ENCODE measurements at regions of chr3 and their contacts with region 1.

Region 1: GRCh38 chr3:150603153-150603979 is at the start of gene SELENOT:
- DNase-seq: peak; percentile 96
- H3K4me3 Mint-ChIP-seq: peak within 1 kb of the TSS; percentile 96
- H3K27ac Mint-ChIP-seq: peak within 1 kb of the TSS; percentile 97
- H3K4me1 Mint-ChIP-seq: peaks cover 51% of the 10 kb centered on the region
- H3K27me3 Mint-ChIP-seq: no peaks in the 10 kb centered on the region
- total RNA-seq, gene SELENOT: 105 to 111 TPM

Region 2: GRCh38 chr3:150582620-150583019 is 20.7 kb before region 1 on chr3:
- CTCF ChIA-PET with region 1: no interaction called
- POLR2A ChIA-PET with region 1: interaction called, 6 read pairs
- intact Hi-C with region 1: loop called (anchors 2 kb)
- DNase-seq: no peak
- H3K4me3 Mint-ChIP-seq: no peak overlapping the region
- H3K27ac Mint-ChIP-seq: peak overlapping the region; percentile 81
- H3K4me1 Mint-ChIP-seq: peaks cover 12% of the 10 kb centered on the region
- H3K27me3 Mint-ChIP-seq: no peaks in the 10 kb centered on the region

Region 3: GRCh38 chr3:150870396-150870795 is 267.0 kb after region 1 on chr3:
- CTCF ChIA-PET with region 1: no interaction called
- POLR2A ChIA-PET with region 1: no interaction called
- intact Hi-C with region 1: loop called (anchors 10 kb)
- DNase-seq: no peak
- H3K4me3 Mint-ChIP-seq: no peak overlapping the region
- H3K27ac Mint-ChIP-seq: no peak overlapping the region
- H3K4me1 Mint-ChIP-seq: peaks cover 1% of the 10 kb centered on the region
- H3K27me3 Mint-ChIP-seq: peaks cover 14% of the 10 kb centered on the region